ENCODE measurements at regions of chr1 and their contacts with region 1.

Region 1: DNA sequence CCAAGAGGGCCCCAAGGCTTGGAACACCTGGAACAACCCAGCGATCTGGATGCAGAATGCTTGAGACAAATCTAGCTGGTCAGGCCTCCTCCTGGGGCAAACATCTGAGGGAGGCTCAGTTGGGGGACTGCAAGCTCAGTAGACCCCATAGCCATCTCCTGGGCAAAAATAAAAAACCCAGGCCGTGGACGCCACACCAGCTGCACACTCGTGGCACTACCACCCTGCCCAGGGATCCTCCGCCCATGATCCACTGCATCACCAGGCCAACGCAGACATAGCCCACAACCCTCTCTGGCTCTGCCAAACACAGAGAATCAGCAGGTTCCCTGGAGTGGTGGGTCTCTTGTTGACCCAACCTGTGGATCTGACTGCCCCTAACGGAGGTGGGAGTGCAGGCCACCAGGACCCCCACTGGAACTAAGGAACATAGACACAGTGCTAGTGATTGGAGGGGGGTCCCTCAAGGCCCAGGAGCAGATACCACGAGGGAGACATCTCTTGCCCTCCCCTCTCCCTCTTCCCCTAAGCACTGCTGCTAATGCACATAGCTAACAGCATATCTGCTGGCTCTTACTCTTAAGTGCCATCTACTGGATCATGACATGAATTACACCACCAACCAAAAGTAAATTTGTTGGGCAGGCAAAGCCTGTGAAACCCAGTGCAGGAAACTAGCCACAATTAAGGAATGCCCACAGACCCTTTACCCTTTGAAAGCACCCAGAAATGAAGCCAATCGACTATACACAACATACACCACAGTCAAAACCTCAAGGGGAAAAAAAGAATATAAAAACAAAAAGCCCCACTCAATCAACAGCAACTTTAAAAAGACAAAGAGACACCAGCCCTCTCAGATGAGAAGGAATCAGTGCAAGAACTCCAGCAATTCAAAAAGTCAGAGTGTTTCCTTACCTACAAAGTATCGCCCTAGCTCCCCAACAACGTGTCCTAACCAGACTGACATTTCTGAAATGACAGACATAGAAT is 147.3 kb downstream of the CHD1L start:
- H3K4me3 ChIP-seq: no peak overlapping the region
- H3K27ac ChIP-seq: no peak overlapping the region
- H3K4me1 ChIP-seq: no peaks in the 10 kb centered on the region
- CTCF ChIP-seq: peak; percentile 52; the same call in 1 of the 2 replicates

Region 2: GRCh38 chr1:147273409-147274336 is 116.2 kb before region 1 on chr1:
- CTCF ChIA-PET with region 1: interaction called, 26 read pairs
- POLR2A ChIA-PET with region 1: interaction called, 4 read pairs
- H3K4me3 ChIP-seq: no peak overlapping the region
- H3K27ac ChIP-seq: no peak overlapping the region
- H3K4me1 ChIP-seq: no peaks in the 10 kb centered on the region
- CTCF ChIP-seq: peak; percentile 40; the same call in 1 of the 2 replicates

Region 3: GRCh38 chr1:147377263-147378246 is 12.3 kb before region 1 on chr1:
- CTCF ChIA-PET with region 1: interaction called, 23 read pairs
- POLR2A ChIA-PET with region 1: no interaction called
- H3K4me3 ChIP-seq: no peak overlapping the region
- H3K27ac ChIP-seq: no peak overlapping the region
- H3K4me1 ChIP-seq: no peaks in the 10 kb centered on the region
- CTCF ChIP-seq: no peak

Region 4: GRCh38 chr1:147579532-147579931 is 189.7 kb after region 1 on chr1:
- CTCF ChIA-PET with region 1: no interaction called
- POLR2A ChIA-PET with region 1: no interaction called
- H3K4me3 ChIP-seq: no peak overlapping the region
- H3K27ac ChIP-seq: no peak overlapping the region
- H3K4me1 ChIP-seq: peaks cover 11% of the 10 kb centered on the region
- CTCF ChIP-seq: no peak